BJ (cell line): ENCODE measurements at regions of chr14 and their contacts with region 1.

Region 1: DNA sequence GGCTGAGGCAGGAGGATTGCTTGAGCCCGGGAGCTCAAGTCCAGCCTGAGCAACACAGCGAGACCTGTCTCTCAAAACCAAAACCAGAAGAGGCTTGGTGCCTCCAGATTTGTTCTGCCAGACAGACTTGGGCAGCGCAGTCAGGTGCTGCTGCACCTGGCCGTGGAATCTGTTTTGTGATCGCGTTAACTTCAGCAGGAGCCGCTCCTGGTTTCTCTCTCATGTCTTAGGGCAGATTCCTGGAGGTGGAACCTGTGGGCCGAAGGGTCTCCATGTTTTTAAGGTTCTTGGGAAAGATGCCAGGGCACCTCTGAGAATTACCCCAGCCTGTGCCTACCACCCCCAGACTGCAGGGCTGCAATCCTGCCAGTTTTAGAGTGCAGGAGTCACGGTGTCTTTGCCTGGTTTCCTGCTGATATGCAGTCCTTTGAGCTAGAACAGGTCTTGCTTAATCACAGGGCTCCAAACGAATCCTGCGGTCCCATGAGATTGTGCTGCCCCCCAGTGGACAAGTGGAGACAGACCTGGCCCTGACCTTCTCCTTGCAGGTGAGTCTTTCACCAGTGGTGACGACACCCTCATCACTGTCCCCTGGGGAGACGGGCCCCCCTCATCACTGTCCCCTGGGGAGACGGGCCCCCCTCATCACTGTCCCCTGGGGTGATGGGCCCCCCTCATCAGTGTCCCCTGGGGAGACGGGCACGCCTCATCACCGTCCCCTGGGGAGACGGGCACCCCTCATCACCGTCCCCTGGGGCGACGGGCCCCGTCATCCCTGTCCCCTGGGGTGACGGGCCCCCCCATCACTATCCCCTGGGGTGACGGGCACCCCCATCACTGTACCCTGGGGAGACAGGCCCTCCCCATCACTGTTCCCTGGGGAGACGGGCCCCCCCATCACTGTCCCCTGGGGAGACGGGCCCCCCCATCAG is 37.6 kb downstream of the PACS2 start:
- DNase-seq: peak; percentile 22
- H3K4me3 ChIP-seq: no peak overlapping the region
- H3K27me3 ChIP-seq: no peaks in the 10 kb centered on the region
- CTCF ChIP-seq: peak; percentile 85

Region 2: DNA sequence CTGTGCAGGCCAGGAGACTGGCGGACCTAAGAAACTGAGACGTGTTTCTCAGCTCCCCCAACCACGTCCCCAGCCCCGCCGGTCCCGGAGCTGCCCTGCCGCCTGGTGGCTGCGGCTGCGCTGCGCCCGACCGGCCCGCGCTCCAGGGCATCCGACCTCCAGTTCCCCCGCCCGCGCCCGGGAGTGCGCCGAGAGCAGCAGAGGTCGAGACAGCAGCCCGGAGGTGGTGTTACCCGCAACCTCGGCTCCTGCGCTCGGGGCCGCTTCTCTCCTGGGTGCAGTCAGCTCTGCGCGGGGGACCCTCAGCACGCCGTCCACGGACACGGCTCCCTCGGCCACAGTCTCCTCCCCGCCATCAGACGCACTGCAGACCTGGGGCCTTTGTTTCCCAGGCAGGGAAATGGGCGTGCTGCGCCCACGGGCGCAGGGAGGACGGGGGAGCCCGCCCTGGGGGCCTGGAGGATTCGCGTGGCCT is 265.3 kb before region 1 on chr14:
- CTCF ChIA-PET with region 1: interaction called, 10 read pairs
- POLR2A ChIA-PET with region 1: no interaction called
- DNase-seq: no peak
- H3K4me3 ChIP-seq: peak overlapping the region; percentile 63
- H3K27me3 ChIP-seq: no peaks in the 10 kb centered on the region; the same call in 1 of the 2 replicates
- CTCF ChIP-seq: peak; percentile 49

Region 3: GRCh38 chr14:105201925-105202513 is 150.2 kb before region 1 on chr14:
- CTCF ChIA-PET with region 1: interaction called, 12 read pairs
- POLR2A ChIA-PET with region 1: no interaction called
- DNase-seq: no peak
- H3K4me3 ChIP-seq: no peak overlapping the region
- H3K27me3 ChIP-seq: no peaks in the 10 kb centered on the region; the same call in 1 of the 2 replicates
- CTCF ChIP-seq: no peak

Region 4: GRCh38 chr14:105337966-105338741 is 14.0 kb before region 1 on chr14:
- CTCF ChIA-PET with region 1: interaction called, 27 read pairs
- POLR2A ChIA-PET with region 1: no interaction called
- DNase-seq: no peak
- H3K4me3 ChIP-seq: no peak overlapping the region
- H3K27me3 ChIP-seq: no peaks in the 10 kb centered on the region
- CTCF ChIP-seq: no peak

Region 5: DNA sequence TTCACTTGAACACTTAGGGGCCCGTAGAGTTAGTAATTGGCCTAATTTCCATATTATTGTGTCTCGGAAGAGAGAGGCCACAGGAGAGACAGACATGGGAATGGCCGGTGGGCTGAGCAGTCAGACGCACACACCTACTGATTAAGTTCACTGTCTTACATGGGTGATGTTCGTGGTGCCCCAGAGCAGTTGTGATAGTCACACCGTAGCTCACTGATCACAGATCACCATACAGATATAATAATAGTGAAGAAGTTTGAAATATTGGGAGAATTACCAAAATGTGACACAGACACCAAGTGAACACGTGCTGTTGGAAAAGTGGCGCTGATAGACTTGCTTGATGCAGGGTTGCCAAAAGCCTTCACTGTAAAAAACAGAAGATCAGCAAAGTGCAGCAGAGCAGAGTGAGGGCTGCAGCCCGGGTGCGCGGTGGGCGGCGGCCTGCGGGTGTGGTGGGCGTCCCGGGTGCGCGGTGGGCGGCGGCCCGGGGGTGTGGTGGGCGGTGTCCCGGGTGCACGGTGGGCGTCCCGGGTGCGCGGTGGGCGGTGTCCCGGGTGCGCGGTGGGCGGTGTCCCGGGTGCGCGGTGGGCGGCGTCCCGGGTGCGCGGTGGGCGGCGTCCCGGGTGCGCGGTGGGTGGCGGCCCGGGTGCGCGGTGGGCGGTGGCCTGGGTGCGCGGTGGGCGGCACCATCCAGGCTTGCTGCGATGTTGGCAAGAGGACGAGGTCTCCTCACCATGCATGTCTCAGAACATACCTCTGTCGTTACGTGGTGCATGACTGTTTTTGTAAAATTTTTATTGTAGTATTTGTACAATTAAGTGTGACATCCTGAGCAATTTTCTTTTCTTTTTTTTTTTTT is 11.9 kb after region 1 on chr14:
- CTCF ChIA-PET with region 1: interaction called, 11 read pairs
- POLR2A ChIA-PET with region 1: no interaction called
- DNase-seq: peak; percentile 44
- H3K4me3 ChIP-seq: peak overlapping the region; percentile 31
- H3K27me3 ChIP-seq: no peaks in the 10 kb centered on the region
- CTCF ChIP-seq: no peak